Endothelial cell of umbilical vein (primary cell): ENCODE measurements at regions of chr4 and their contacts with region 1.

Region 1: GRCh38 chr4:119087121-119087520 is 48.5 kb upstream of the MYOZ2 start:
- DNase-seq: peak; percentile 53
- H3K4me3 ChIP-seq: no peak overlapping the region
- H3K27ac ChIP-seq: no peak overlapping the region
- H3K4me1 ChIP-seq: no peaks in the 10 kb centered on the region
- H3K27me3 ChIP-seq: no peaks in the 10 kb centered on the region
- CTCF ChIP-seq: peak; percentile 14 to 22
- POLR2A ChIP-seq: no peak

Region 2: DNA sequence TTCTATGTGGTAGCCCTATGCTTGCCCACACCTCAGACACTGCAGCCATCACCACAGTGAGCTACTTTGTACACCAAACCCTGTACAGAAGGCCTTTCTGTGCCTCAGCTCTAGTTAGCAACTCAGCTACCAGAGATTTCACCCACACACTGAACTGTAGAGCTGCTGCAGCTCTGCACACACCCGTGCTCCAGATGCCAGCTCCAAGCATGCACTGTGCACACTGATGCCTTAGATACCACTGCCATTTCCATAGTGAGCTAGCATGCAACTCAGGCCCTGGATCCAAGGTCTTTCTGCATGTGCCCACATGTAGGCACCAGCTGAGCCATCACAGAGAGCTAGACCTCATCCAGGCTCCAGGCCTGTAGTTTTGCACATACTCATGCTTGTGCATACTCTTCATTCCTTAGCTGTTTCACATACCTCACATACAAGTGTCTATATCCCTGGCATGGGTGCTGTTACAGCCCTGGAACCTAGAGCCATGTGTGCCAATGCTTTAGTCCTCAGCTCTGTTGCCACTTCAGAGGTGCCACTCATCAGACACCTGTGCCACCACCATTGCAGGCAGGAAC is 1476.3 kb before region 1 on chr4:
- CTCF ChIA-PET with region 1: no interaction called
- POLR2A ChIA-PET with region 1: no interaction called
- dilution Hi-C with region 1: no loop called
- intact Hi-C with region 1: no loop called
- DNase-seq: no peak
- H3K4me3 ChIP-seq: no peak overlapping the region
- H3K27ac ChIP-seq: no peak overlapping the region
- H3K4me1 ChIP-seq: no peaks in the 10 kb centered on the region
- H3K27me3 ChIP-seq: no peaks in the 10 kb centered on the region
- CTCF ChIP-seq: no peak
- POLR2A ChIP-seq: no peak

Region 3: DNA sequence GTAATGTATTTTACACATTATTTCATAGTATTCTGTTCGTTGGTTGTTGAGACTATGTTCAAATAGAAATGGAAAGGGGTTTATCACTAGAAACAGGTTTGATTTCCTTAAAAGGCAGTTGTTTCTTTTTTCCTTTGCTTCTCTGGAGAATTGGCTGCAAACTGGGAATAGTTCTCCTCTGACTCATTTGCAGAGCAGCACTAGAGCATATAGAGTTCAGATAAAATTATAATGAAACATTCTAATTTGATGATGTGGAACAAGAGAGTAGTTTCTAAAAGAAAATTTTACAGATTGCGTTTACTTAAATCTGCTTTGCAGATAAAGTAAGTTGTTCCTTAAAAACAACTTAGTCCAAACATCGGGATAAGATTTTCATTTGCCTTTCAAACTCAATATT is 168.7 kb before region 1 on chr4:
- CTCF ChIA-PET with region 1: no interaction called
- POLR2A ChIA-PET with region 1: no interaction called
- dilution Hi-C with region 1: no loop called
- intact Hi-C with region 1: no loop called
- DNase-seq: peak; percentile 90
- H3K4me3 ChIP-seq: no peak overlapping the region
- H3K27ac ChIP-seq: peak overlapping the region; percentile 71
- H3K4me1 ChIP-seq: peaks cover 17% of the 10 kb centered on the region
- H3K27me3 ChIP-seq: no peaks in the 10 kb centered on the region
- CTCF ChIP-seq: no peak
- POLR2A ChIP-seq: no peak

Region 4: DNA sequence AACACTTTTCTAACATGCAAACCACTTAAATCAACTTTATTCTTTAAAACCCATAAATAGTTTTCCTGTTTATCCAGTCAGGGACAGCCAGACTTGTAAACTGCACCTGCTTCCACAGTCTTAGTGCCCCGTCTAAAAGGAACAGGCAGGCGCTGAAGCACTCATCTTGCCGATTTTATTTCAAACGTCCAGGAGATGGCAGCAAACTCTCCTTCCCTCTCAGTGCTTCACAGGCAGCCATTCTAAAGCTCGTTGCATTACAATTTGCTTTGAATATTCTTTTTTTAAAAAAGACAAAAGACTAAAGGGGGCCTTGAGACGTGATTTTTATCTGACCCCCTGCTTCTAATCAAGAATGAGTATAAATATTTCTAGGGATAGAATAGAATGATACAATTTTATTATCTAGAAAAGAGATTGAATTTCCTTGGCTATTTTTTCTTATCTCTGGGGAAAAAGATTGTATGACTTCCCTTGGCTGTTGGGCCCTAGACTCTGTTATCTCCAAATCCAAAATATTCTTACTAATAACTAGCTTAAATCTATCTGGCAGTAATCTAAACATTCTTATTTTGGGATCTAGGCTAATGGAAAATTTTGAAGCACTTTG is 45.1 kb before region 1 on chr4:
- CTCF ChIA-PET with region 1: interaction called, 14 read pairs
- POLR2A ChIA-PET with region 1: no interaction called
- dilution Hi-C with region 1: no loop called
- intact Hi-C with region 1: no loop called
- DNase-seq: peak; percentile 86
- H3K4me3 ChIP-seq: no peak overlapping the region
- H3K27ac ChIP-seq: no peak overlapping the region
- H3K4me1 ChIP-seq: peaks cover 15% of the 10 kb centered on the region
- H3K27me3 ChIP-seq: no peaks in the 10 kb centered on the region
- CTCF ChIP-seq: peak; percentile 50
- POLR2A ChIP-seq: no peak

Region 5: GRCh38 chr4:119097282-119097900 is 10.3 kb after region 1 on chr4:
- CTCF ChIA-PET with region 1: interaction called, 23 read pairs
- POLR2A ChIA-PET with region 1: no interaction called
- dilution Hi-C with region 1: no loop called
- intact Hi-C with region 1: no loop called
- DNase-seq: no peak
- H3K4me3 ChIP-seq: no peak overlapping the region
- H3K27ac ChIP-seq: no peak overlapping the region
- H3K4me1 ChIP-seq: peaks cover 17% of the 10 kb centered on the region
- H3K27me3 ChIP-seq: no peaks in the 10 kb centered on the region
- CTCF ChIP-seq: no peak
- POLR2A ChIP-seq: no peak

Region 6: GRCh38 chr4:119300101-119300978 is 213.2 kb after region 1 on chr4:
- CTCF ChIA-PET with region 1: interaction called, 13 read pairs
- POLR2A ChIA-PET with region 1: no interaction called
- dilution Hi-C with region 1: no loop called
- intact Hi-C with region 1: no loop called
- DNase-seq: peak; percentile 89
- H3K4me3 ChIP-seq: peak overlapping the region; percentile 49 to 82 (median 76)
- H3K27ac ChIP-seq: peak overlapping the region; percentile 60
- H3K4me1 ChIP-seq: peaks cover 12% of the 10 kb centered on the region
- H3K27me3 ChIP-seq: no peaks in the 10 kb centered on the region
- CTCF ChIP-seq: peak in 1 of 2 donors; percentile 1
- POLR2A ChIP-seq: peak; percentile 78